CD4-positive, alpha-beta memory T cell (primary cell): ENCODE measurements at regions of chr11 and their contacts with region 1.

Region 1: DNA sequence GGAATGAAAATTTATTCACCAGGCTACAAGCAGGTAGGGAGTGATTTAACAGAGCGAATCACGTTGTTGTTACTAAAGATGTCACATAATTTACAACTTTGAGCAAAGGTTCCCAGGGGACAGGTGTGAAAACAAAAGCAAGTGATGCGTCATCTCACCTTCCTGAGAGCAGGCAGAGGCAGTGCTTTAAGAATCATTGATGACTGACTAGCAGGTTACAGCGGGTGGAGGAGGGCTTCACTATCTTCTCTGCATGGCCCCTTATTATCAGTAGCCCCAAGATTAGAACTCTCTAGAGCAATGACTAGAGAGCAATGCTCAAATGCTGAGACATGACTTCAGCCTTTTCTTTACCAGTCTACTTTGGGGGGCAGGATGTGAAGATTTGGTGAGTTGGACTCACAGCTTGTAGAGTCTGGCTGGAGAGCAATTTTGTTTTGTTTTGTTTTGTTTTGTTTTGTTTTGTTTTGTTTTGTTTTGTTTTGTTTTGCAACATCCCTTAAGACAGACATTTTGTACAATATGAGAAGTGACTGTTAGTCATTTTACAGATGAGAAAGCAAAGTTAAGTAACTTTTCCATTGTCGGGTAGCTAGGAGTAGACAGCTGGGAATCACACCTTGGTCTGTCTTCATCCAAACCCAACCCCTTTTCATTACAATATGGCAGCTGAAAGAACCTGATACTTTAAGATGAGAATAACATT is 84.8 kb downstream of the SLC1A2 start:
- DNase-seq: peak; percentile 22 to 63 (median 26)
- H3K4me3 ChIP-seq: no peak overlapping the region
- H3K4me3 Mint-ChIP-seq: peak overlapping the region in 2 of 8 donors; percentile 31 to 59
- H3K27ac ChIP-seq: no peak overlapping the region
- H3K27ac Mint-ChIP-seq: peak overlapping the region; percentile 19 to 93 (median 82)
- H3K4me1 ChIP-seq: peaks cover 42% of the 10 kb centered on the region
- H3K4me1 Mint-ChIP-seq: peaks cover 35 to 47% (median 42%) of the 10 kb centered on the region in 4 donors
- H3K27me3 ChIP-seq: no peaks in the 10 kb centered on the region
- H3K27me3 Mint-ChIP-seq: peaks cover 0 to 2% of the 10 kb centered on the region in 2 donors

Region 2: DNA sequence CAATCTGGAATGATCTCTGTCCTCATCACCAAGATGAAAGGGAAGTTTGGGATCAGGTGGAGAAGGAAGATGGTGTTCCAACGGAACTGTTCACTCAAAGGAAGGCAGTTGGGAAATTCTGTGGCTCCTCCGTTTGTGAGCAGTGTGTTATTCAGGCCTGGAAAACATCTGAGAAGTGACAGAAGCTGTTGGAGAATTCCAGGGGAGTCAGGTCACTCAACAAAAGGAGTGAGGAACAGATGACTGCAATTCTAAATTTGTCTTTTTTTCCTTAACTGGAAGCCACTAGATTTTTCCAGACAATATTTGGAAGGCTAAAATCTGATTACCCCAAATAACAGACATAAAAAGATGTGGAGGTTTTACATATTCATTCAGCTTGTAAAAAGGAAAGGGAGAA is 87.8 kb before region 1 on chr11:
- CTCF ChIA-PET with region 1: no interaction called
- POLR2A ChIA-PET with region 1: interaction called, 16 read pairs
- intact Hi-C with region 1: no loop called
- DNase-seq: no peak
- H3K4me3 ChIP-seq: no peak overlapping the region
- H3K4me3 Mint-ChIP-seq: peak overlapping the region in 5 of 8 donors; percentile 18 to 77 (median 67)
- H3K27ac ChIP-seq: peak overlapping the region; percentile 47
- H3K27ac Mint-ChIP-seq: peak overlapping the region; percentile 95 to 99 (median 98)
- H3K4me1 ChIP-seq: peaks cover 72% of the 10 kb centered on the region
- H3K4me1 Mint-ChIP-seq: peaks cover 47 to 78% (median 62%) of the 10 kb centered on the region in 4 donors
- H3K27me3 ChIP-seq: no peaks in the 10 kb centered on the region
- H3K27me3 Mint-ChIP-seq: no peaks in the 10 kb centered on the region

Region 3: DNA sequence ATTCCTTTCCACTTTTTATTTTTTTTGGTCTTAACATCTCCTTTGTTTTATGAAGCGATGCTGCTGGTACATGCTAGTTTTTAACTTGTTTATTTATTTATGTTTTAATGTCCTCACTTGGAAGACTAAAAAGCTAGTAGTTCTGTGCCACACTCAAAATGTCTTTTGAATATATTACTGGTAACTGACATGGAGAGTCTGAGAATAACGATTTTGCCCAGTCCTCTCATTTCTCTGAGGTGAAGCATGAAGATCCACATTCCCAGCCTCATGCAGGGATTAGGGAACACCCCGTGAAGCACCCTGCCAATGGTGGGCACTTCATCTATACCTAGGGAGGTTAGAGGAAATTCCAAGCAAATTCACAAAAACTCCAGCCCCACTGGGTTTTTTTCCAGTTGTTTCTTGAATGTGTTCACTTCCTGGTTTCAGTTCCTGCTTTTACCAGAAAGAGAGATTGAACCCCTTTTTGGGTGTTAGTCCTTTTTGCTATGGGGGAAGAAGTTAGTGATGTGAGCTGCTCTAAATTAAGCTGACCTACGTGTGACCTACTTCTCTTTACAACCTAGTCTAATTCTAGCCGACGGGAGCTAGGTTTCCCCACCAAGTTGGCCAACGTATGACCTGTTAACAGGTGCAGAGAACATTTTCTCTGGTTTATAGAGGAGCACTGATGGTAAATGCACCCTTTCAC is 21.3 kb before region 1 on chr11:
- CTCF ChIA-PET with region 1: interaction called, 5 read pairs
- POLR2A ChIA-PET with region 1: interaction called, 12 read pairs
- intact Hi-C with region 1: no loop called
- DNase-seq: no peak
- H3K4me3 ChIP-seq: no peak overlapping the region
- H3K4me3 Mint-ChIP-seq: no peak overlapping the region
- H3K27ac ChIP-seq: no peak overlapping the region
- H3K27ac Mint-ChIP-seq: no peak overlapping the region
- H3K4me1 ChIP-seq: peaks cover 8% of the 10 kb centered on the region
- H3K4me1 Mint-ChIP-seq: peaks cover 4 to 14% (median 10%) of the 10 kb centered on the region in 4 donors
- H3K27me3 ChIP-seq: no peaks in the 10 kb centered on the region
- H3K27me3 Mint-ChIP-seq: no peaks in the 10 kb centered on the region

Region 4: DNA sequence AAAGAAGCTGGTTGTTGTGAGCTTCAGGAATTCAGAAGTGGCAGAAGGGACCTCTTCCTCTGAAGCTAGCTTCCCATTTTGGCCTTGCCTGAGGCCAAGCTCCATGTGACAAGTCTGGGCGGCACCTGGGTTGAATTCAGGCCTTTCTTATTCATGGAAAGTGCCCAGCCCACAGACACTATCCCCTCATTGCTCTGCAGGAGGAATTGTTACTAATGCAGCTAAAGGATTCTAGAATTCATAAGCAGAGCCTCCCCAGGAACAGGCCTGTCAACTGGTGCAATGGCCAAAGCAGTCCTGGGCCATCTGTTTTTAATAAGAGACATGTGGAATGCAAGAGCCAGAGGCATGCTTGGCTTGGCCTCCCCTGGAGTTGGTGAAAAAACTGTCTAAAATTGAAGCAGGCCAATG is 13.4 kb after region 1 on chr11:
- CTCF ChIA-PET with region 1: interaction called, 5 read pairs
- POLR2A ChIA-PET with region 1: interaction called, 30 read pairs
- intact Hi-C with region 1: loop called (anchors 1 kb)
- DNase-seq: no peak
- H3K4me3 ChIP-seq: no peak overlapping the region
- H3K4me3 Mint-ChIP-seq: peak overlapping the region in 2 of 8 donors; percentile 15 to 82
- H3K27ac ChIP-seq: no peak overlapping the region
- H3K27ac Mint-ChIP-seq: peak overlapping the region in 1 of 7 donors; percentile 30
- H3K4me1 ChIP-seq: peaks cover 48% of the 10 kb centered on the region
- H3K4me1 Mint-ChIP-seq: peaks cover 34 to 67% (median 44%) of the 10 kb centered on the region in 4 donors
- H3K27me3 ChIP-seq: no peaks in the 10 kb centered on the region
- H3K27me3 Mint-ChIP-seq: no peaks in the 10 kb centered on the region

Region 5: GRCh38 chr11:35373284-35373933 is 38.9 kb after region 1 on chr11:
- CTCF ChIA-PET with region 1: interaction called, 4 read pairs
- POLR2A ChIA-PET with region 1: interaction called, 4 read pairs
- intact Hi-C with region 1: loop called (anchors 5 kb)
- DNase-seq: no peak
- H3K4me3 ChIP-seq: no peak overlapping the region
- H3K4me3 Mint-ChIP-seq: no peak overlapping the region
- H3K27ac ChIP-seq: no peak overlapping the region
- H3K27ac Mint-ChIP-seq: peak overlapping the region in 3 of 7 donors; percentile 38 to 77 (median 70)
- H3K4me1 ChIP-seq: no peaks in the 10 kb centered on the region
- H3K4me1 Mint-ChIP-seq: peaks cover 0 to 3% (median 3%) of the 10 kb centered on the region in 4 donors
- H3K27me3 ChIP-seq: no peaks in the 10 kb centered on the region
- H3K27me3 Mint-ChIP-seq: peaks cover 0 to 1% of the 10 kb centered on the region in 2 donors

Region 6: DNA sequence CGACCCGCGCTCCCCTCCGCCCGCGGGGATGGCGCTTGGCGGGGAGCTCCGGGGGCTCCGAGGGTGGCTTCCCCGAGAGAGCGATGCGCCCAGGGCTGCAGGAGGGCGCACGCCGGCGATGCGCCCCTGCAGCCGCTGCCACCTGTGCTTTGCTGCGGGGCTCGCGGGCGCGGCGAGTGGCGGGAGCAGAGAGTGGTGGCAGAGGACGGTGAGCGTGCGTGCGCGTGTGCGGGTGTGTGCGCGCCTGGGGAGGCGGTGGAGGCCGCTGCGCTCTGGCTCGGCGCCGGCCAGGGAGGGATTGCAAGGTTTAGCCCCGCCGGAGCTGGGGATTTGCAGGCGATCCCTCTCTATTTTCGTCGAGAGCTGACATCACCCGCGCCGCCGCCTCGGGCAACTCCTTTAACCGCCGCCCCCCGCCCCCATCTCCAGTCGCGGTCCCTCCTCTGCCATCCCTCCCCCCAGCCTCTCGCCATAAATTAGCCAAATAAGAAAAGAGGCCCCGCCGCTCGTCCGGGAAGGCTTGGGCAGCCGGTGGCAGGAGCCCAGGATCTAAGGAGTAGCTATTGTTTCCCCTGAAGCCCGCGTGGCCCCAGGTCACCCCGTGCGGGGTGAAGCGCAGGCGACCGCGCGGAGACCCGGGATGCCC is 84.8 kb after region 1 on chr11 and contains the start of gene SLC1A2:
- CTCF ChIA-PET with region 1: no interaction called
- POLR2A ChIA-PET with region 1: no interaction called
- intact Hi-C with region 1: no loop called
- DNase-seq: no peak
- H3K4me3 ChIP-seq: no peak within 1 kb of the TSS
- H3K4me3 Mint-ChIP-seq: peak within 1 kb of the TSS; percentile 11 to 79 (median 66)
- H3K27ac ChIP-seq: no peak within 1 kb of the TSS
- H3K27ac Mint-ChIP-seq: no peak within 1 kb of the TSS
- H3K4me1 ChIP-seq: no peaks in the 10 kb centered on the region
- H3K4me1 Mint-ChIP-seq: peaks cover 7 to 19% (median 13%) of the 10 kb centered on the region in 4 donors
- H3K27me3 ChIP-seq: peaks cover 37% of the 10 kb centered on the region
- H3K27me3 Mint-ChIP-seq: peaks cover 64 to 65% of the 10 kb centered on the region in 2 donors
- total RNA-seq, gene SLC1A2: 0.08 to 0.09 TPM